Aorta (tissue), 5 donors: ENCODE measurements at regions of chr1 and their contacts with region 1.

Region 1: GRCh38 chr1:53945433-53946251 is at the start of gene IFT25:
- DNase-seq: peak; percentile 98 to 100
- ATAC-seq: peak; percentile 98
- H3K4me3 ChIP-seq: peak within 1 kb of the TSS; percentile 80 to 92
- H3K27ac ChIP-seq: peak within 1 kb of the TSS in 1 of 2 donors; percentile 89
- H3K4me1 ChIP-seq: no peaks in the 10 kb centered on the region
- H3K27me3 ChIP-seq: no peaks in the 10 kb centered on the region
- total RNA-seq, gene IFT25: 24.0 to 39.5 TPM

Region 2: DNA sequence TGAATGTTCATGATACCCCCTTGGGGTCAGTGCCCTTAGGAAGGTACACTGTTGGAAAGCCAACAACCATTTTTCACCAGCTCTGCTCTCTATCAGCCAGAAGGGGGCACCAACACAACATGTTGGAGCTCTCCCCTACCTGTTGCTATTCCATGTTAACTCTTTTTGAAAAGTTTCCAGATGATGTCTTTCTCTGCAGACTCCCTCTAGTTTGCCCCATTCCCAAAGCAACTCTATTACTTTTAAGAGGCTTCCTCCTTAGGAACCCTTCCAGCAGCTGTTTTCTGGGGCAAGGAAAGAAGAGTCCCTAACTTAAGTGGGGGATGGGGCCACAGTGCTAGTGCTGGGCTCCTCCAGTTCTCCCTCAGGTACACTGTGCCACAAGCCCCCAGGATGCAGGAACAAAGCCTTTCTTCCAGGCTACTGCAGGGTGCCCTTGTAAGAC is 84.7 kb before region 1 on chr1:
- intact Hi-C with region 1: no loop called
- DNase-seq: no peak
- ATAC-seq: no peak
- H3K4me3 ChIP-seq: no peak overlapping the region
- H3K27ac ChIP-seq: no peak overlapping the region
- H3K4me1 ChIP-seq: no peaks in the 10 kb centered on the region
- H3K27me3 ChIP-seq: no peaks in the 10 kb centered on the region

Region 3: GRCh38 chr1:53878492-53879105 is 67.0 kb before region 1 on chr1:
- intact Hi-C with region 1: loop called in 1 of 2 experiments (anchors 2 kb)
- DNase-seq: no peak
- ATAC-seq: no peak
- H3K4me3 ChIP-seq: no peak overlapping the region
- H3K27ac ChIP-seq: no peak overlapping the region
- H3K4me1 ChIP-seq: no peaks in the 10 kb centered on the region
- H3K27me3 ChIP-seq: no peaks in the 10 kb centered on the region

Region 4: GRCh38 chr1:53889304-53890298 is 56.0 kb before region 1 on chr1 and contains the start of gene YIPF1:
- intact Hi-C with region 1: loop called (anchors 2 to 5 kb)
- DNase-seq: peak; percentile 95 to 97
- ATAC-seq: peak; percentile 98
- H3K4me3 ChIP-seq: peak within 1 kb of the TSS; percentile 83 to 99
- H3K27ac ChIP-seq: peak within 1 kb of the TSS; percentile 11 to 51
- H3K4me1 ChIP-seq: no peaks in the 10 kb centered on the region
- H3K27me3 ChIP-seq: no peaks in the 10 kb centered on the region
- total RNA-seq, gene YIPF1: 17.7 to 23.4 TPM

Region 5: GRCh38 chr1:53959664-53960250 is 14.1 kb after region 1 on chr1:
- intact Hi-C with region 1: no loop called
- DNase-seq: no peak
- ATAC-seq: no peak
- H3K4me3 ChIP-seq: no peak overlapping the region
- H3K27ac ChIP-seq: no peak overlapping the region
- H3K4me1 ChIP-seq: peaks cover 0 to 5% of the 10 kb centered on the region in 2 donors
- H3K27me3 ChIP-seq: no peaks in the 10 kb centered on the region

Region 6: GRCh38 chr1:54052934-54053744 is 107.5 kb after region 1 on chr1 and contains the starts of genes TCEANC2 and TMEM59:
- intact Hi-C with region 1: loop called in 1 of 2 experiments (anchors 5 kb)
- DNase-seq: peak; percentile 99
- ATAC-seq: peak; percentile 98
- H3K4me3 ChIP-seq: peak within 1 kb of the TSS; percentile 79 to 82
- H3K27ac ChIP-seq: peak within 1 kb of the TSS; percentile 3 to 99
- H3K4me1 ChIP-seq: peaks cover 0 to 1% of the 10 kb centered on the region in 2 donors
- H3K27me3 ChIP-seq: no peaks in the 10 kb centered on the region
- total RNA-seq, gene TCEANC2: 3.5 to 7.0 TPM
- total RNA-seq, gene TMEM59: 294 to 356 TPM

Region 7: GRCh38 chr1:54107131-54107530 is 161.5 kb after region 1 on chr1:
- intact Hi-C with region 1: no loop called
- DNase-seq: no peak
- ATAC-seq: no peak
- H3K4me3 ChIP-seq: no peak overlapping the region
- H3K27ac ChIP-seq: no peak overlapping the region
- H3K4me1 ChIP-seq: no peaks in the 10 kb centered on the region
- H3K27me3 ChIP-seq: no peaks in the 10 kb centered on the region